Activated CD4-positive, alpha-beta memory T cell treated with anti-CD3 and anti-CD28 coated beads for 36 hours (primary cell): ENCODE measurements at regions of chr4 and their contacts with region 1.

Region 1: GRCh38 chr4:38675146-38676121 is 11.4 kb downstream of the KLF3 start:
- DNase-seq: peak; percentile 89
- H3K4me3 Mint-ChIP-seq: peak overlapping the region; percentile 22
- H3K27ac Mint-ChIP-seq: peak overlapping the region; percentile 19
- H3K4me1 Mint-ChIP-seq: peaks cover 79% of the 10 kb centered on the region
- H3K27me3 Mint-ChIP-seq: no peaks in the 10 kb centered on the region

Region 2: DNA sequence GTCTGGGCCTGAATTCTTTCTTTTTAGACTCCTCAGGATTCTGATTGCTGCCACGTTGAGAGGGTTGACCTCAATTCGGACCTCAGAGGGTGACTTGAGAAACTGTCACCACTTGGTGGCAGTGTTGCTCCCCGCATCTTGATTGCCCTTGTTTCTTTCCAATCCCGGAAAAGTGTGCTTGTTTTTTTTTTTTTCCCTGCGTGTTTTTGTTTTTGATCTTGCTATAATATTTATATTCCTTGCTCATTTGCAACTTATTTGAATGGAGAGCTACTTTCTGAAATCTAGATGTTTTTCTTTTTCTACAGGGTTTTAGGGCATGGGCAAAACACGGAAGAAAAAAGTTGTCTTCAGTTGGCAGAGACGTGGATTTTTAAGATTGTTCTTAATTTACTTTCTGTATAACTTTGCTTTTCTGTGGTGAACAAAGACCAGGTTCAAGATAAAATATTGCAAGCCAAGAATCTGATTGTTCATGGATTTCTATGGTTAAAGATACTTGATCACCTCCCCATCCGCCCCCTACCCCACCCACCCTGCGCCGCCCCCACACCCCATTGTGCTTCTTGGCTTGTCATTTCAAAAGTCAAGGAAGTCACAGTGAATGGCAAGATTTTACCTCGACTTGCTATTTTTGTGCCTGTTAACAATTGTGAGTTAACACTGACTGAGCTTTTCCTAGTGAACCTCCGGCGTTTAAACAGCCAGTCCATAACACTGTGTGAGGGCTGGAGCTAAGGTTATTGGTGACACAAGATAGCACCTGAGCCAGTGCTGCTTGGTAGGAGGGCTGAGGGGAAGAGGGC is 613.1 kb before region 1 on chr4:
- CTCF ChIA-PET with region 1: interaction called, 4 read pairs
- POLR2A ChIA-PET with region 1: no interaction called
- intact Hi-C with region 1: loop called (anchors 2 kb)
- DNase-seq: peak; percentile 80
- H3K4me3 Mint-ChIP-seq: peak overlapping the region; percentile 77
- H3K27ac Mint-ChIP-seq: peak overlapping the region; percentile 70
- H3K4me1 Mint-ChIP-seq: peaks cover 14% of the 10 kb centered on the region
- H3K27me3 Mint-ChIP-seq: no peaks in the 10 kb centered on the region

Region 3: DNA sequence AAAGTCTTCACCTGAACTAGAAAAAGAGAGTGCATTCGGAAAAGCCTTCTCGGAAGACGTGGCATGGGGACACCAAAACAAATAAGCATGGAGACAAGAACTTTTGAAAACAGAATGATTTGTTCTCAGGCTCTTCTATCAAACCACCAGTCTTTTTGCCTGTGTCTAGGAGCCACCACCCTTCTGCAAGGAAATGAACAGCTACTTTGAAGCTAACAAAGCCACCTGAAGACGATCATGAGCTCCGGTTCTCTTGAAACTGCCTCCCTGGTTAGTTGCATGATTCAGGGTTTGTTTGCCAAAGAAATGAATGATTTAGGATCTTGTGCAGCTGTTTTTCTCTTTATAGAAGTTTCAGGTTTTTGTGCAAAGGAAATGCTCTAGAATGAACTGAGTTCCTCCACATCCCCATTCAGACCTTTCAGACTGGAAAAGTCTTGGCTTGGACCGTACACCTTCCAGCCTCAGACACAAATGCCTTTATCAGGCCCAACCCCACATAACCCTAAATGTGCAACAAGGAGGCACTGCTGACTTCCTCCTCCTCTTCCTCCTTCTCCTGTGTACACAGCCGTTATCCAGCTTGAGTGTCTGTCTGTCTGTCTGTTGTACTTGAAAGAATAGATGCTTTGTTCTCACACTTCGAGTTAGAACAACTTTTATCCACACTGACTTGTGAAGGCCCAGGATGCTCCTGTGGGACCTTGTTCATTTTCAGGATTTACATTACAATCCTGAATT is 346.3 kb before region 1 on chr4:
- CTCF ChIA-PET with region 1: interaction called, 13 read pairs
- POLR2A ChIA-PET with region 1: no interaction called
- intact Hi-C with region 1: no loop called
- DNase-seq: no peak
- H3K4me3 Mint-ChIP-seq: no peak overlapping the region
- H3K27ac Mint-ChIP-seq: no peak overlapping the region
- H3K4me1 Mint-ChIP-seq: peaks cover 42% of the 10 kb centered on the region
- H3K27me3 Mint-ChIP-seq: peaks cover 26% of the 10 kb centered on the region

Region 4: DNA sequence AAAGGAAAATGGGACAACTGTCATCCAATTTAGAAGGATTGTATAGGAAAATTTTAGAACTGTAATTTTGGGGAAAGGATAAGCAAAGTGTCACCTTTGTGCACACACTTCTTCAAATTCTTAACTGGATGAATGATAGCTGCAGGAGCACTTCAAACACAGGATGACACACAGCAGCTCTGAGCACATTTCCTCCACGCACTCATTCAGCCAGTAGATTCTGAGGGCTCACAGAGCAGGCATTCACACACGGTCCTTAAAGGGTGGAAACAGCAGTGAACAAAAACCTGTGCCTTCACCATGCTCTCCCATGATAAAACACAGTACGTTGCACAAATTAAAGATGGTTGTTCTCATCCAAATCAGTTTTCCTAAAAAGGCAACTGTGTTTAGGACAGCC is 49.9 kb before region 1 on chr4:
- CTCF ChIA-PET with region 1: no interaction called
- POLR2A ChIA-PET with region 1: no interaction called
- intact Hi-C with region 1: no loop called
- DNase-seq: peak; percentile 22
- H3K4me3 Mint-ChIP-seq: no peak overlapping the region
- H3K27ac Mint-ChIP-seq: no peak overlapping the region
- H3K4me1 Mint-ChIP-seq: peaks cover 5% of the 10 kb centered on the region
- H3K27me3 Mint-ChIP-seq: no peaks in the 10 kb centered on the region

Region 5: DNA sequence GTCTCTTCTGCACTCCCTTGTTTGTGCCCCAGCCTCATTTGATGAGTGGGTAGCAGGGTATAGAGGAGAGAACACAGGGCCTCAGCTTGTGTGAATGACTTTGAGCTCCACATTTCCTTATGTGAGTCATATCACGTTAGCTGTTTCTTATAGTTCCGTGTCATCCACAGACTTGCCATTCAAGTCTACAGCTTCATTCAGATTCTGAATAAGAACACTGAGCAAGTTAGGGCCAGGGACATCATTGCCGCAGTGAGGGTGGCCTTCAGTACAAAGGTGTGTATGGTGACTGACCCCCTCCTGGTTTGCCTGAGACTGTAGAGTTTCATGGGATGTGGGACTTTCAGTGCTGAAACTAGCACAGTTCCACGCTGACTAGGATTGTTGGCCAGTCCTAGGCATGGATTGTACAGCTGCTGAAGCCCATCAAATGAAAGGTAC is 12.2 kb after region 1 on chr4:
- CTCF ChIA-PET with region 1: interaction called, 14 read pairs
- POLR2A ChIA-PET with region 1: no interaction called
- intact Hi-C with region 1: no loop called
- DNase-seq: peak; percentile 48
- H3K4me3 Mint-ChIP-seq: no peak overlapping the region
- H3K27ac Mint-ChIP-seq: no peak overlapping the region
- H3K4me1 Mint-ChIP-seq: peaks cover 49% of the 10 kb centered on the region
- H3K27me3 Mint-ChIP-seq: no peaks in the 10 kb centered on the region

Region 6: GRCh38 chr4:38730830-38731646 is 55.6 kb after region 1 on chr4:
- CTCF ChIA-PET with region 1: interaction called, 25 read pairs
- POLR2A ChIA-PET with region 1: no interaction called
- intact Hi-C with region 1: loop called (anchors 5 kb)
- DNase-seq: peak; percentile 90
- H3K4me3 Mint-ChIP-seq: no peak overlapping the region
- H3K27ac Mint-ChIP-seq: no peak overlapping the region
- H3K4me1 Mint-ChIP-seq: peaks cover 14% of the 10 kb centered on the region
- H3K27me3 Mint-ChIP-seq: no peaks in the 10 kb centered on the region